Tibial artery (tissue), 4 donors: ENCODE measurements at regions of chr2 and their contacts with region 1.

Region 1: DNA sequence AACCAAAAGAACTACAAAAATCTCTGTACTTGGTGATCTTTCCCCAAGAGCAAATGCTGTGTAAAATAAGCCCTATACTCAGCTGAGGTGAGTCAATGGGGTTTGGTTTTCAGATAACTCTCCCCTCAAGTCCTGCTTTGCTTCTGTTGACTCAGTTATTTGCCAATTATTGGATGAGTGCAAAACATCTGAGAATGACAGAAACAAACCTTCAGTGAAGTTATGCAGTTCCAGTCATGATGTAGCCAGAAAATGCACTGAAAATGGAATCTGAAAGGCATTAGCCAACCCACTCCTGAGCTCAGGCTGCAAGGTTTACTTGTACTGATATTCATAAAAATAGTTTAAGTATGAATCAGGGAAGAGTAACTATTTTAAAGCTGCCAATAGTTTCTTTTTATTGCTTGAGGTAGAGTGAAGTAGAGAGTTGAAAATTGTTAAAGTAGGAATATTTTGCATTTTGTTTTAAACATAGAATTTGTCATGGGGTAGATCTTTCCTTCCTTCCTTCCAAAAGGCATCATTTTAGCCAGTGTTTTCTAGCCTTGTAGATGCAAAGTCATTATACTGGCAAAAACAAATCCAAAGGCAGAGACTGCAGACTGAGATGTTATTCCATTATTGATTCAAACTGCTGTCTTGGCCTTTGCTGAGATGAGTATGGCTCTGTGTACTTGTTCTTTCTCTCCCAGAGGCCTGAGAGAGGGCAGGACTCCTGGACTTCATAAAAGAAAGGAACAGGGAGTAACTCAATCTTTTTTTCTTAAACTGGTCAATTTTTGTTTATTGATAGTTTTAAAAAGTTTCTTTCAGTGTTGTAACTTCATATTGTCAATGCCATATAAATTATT is 215.3 kb downstream of the RND3 start:
- DNase-seq: no peak
- H3K4me3 ChIP-seq: no peak overlapping the region
- H3K27ac ChIP-seq: peak overlapping the region; percentile 29 to 37
- H3K4me1 ChIP-seq: peaks cover 4 to 14% (median 7%) of the 10 kb centered on the region in 4 donors
- H3K27me3 ChIP-seq: no peaks in the 10 kb centered on the region
- CTCF ChIP-seq: no peak

Region 2: DNA sequence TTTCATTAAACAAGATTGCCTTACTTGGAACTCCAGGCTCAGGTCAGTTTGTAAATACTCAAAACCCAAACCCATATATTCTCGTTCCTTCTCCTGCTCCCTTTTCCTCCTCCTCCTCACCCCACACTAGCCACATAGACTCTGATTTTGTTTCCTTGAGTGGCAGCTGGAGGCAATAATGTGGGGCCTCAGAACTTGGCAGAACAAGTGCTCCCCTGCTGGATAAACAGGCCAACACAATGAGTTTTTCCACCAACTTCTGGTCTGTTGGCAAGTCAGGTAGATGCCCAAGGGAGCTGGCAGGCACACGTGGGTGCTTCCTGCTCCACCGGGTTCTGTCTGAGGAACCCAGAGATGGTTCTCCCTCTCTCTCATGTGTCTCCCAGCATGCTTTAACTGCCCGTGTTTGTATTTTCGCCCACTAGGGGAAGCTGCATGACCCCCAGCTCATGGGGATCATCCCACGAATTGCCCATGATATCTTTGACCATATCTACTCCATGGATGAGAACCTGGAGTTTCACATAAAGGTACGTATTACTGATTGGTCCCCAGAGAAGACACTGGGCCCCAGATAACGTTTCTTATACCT is 1335.2 kb before region 1 on chr2:
- intact Hi-C with region 1: no loop called
- DNase-seq: no peak
- H3K4me3 ChIP-seq: no peak overlapping the region
- H3K27ac ChIP-seq: no peak overlapping the region
- H3K4me1 ChIP-seq: no peaks in the 10 kb centered on the region
- H3K27me3 ChIP-seq: no peaks in the 10 kb centered on the region
- CTCF ChIP-seq: no peak

Region 3: DNA sequence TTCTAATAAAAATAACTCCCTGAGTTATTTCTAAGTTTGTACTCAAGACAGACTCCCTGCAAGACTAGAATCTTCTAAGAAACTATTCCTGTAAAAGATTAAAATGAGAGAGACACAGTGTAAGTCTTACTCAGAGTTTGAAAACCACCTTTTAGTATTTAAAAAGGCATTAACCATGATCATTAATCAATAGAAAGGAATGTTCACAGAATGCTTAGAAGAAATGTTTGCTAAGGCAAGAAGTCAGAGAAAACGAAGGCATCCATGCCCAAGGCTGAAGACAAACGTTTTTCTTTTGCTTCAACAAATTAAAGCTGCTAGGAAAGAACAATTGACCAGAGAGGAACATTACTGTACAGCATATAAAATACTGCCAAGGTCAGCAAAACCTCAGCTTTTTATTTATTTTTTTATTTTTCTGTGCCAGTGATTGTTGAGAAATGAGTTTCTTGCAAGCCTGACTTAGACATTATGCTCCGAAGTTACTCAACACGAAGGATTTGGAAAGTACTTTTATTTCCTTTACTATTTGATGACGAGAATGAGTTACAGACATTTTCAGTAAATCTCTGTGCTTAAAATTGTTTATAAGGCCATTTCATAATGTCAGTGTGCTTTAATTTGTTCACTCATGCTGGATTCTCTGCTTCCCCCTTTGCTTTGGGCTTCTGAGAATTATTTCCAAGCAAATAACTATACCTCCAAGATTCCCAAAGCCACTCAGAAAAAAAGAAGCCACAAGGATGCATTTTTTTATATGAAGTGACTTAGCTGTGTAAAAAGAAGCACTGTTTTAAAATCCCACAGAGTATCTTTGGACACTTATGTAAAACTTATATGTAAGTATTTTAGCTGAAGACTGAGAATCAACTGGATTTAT is 194.8 kb after region 1 on chr2:
- intact Hi-C with region 1: loop called (anchors 10 kb)
- DNase-seq: no peak
- H3K4me3 ChIP-seq: peak overlapping the region; percentile 4 to 26
- H3K27ac ChIP-seq: peak overlapping the region; percentile 65 to 67
- H3K4me1 ChIP-seq: peaks cover 0 to 44% (median 18%) of the 10 kb centered on the region in 4 donors
- H3K27me3 ChIP-seq: no peaks in the 10 kb centered on the region
- CTCF ChIP-seq: no peak